Heart right ventricle (tissue), 16 donors: ENCODE measurements at regions of chr17 and their contacts with region 1.

Region 1: GRCh38 chr17:69406941-69407340 is 7.6 kb upstream of the MAP2K6 start:
- DNase-seq: no peak
- ATAC-seq: no peak
- H3K4me3 ChIP-seq: no peak overlapping the region
- H3K27ac ChIP-seq: no peak overlapping the region
- H3K4me1 ChIP-seq: no peaks in the 10 kb centered on the region
- H3K27me3 ChIP-seq: peaks cover 0 to 5% (median 0%) of the 10 kb centered on the region in 7 donors
- CTCF ChIP-seq: no peak

Region 2: GRCh38 chr17:69358688-69359596 is 48.0 kb before region 1 on chr17:
- intact Hi-C with region 1: loop called in 1 of 10 experiments (anchors 1 kb)
- DNase-seq: no peak
- ATAC-seq: no peak
- H3K4me3 ChIP-seq: no peak overlapping the region
- H3K27ac ChIP-seq: no peak overlapping the region
- H3K4me1 ChIP-seq: no peaks in the 10 kb centered on the region
- H3K27me3 ChIP-seq: no peaks in the 10 kb centered on the region
- CTCF ChIP-seq: no peak